ENCODE measurements at regions of chr12 and their contacts with region 1.

Region 1: GRCh38 chr12:15698377-15698871 is 90.8 kb downstream of the EPS8 start:
- DNase-seq: no peak
- ATAC-seq: no peak
- H3K4me3 ChIP-seq: no peak overlapping the region
- H3K27ac ChIP-seq: peak overlapping the region; percentile 54
- H3K4me1 ChIP-seq: peaks cover 23% of the 10 kb centered on the region
- H3K27me3 ChIP-seq: no peaks in the 10 kb centered on the region
- CTCF ChIP-seq: no peak

Region 2: DNA sequence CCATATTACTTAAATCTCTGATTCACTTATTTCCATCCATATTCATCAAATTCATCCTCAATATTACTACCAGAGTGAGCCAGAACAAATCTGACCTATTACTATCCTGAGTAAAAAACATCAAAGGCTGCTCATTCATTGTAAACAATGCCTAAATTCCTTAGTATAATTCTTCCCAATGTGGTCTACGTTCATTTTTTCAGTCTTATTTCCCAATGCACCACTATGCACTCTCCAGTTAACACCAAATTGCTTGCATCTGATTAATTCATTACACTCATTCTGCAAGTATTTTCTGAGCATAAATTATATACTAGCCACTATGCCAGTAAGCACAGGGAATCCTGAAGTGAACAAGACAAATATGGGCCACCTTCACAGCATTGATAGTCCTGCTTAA is 19.3 kb before region 1 on chr12:
- CTCF ChIA-PET with region 1: no interaction called
- POLR2A ChIA-PET with region 1: no interaction called
- in situ Hi-C with region 1: no loop called
- intact Hi-C with region 1: no loop called
- DNase-seq: no peak
- ATAC-seq: no peak
- H3K4me3 ChIP-seq: no peak overlapping the region
- H3K27ac ChIP-seq: no peak overlapping the region
- H3K4me1 ChIP-seq: no peaks in the 10 kb centered on the region; the same call in 1 of the 2 replicates
- H3K27me3 ChIP-seq: no peaks in the 10 kb centered on the region
- CTCF ChIP-seq: no peak

Region 3: DNA sequence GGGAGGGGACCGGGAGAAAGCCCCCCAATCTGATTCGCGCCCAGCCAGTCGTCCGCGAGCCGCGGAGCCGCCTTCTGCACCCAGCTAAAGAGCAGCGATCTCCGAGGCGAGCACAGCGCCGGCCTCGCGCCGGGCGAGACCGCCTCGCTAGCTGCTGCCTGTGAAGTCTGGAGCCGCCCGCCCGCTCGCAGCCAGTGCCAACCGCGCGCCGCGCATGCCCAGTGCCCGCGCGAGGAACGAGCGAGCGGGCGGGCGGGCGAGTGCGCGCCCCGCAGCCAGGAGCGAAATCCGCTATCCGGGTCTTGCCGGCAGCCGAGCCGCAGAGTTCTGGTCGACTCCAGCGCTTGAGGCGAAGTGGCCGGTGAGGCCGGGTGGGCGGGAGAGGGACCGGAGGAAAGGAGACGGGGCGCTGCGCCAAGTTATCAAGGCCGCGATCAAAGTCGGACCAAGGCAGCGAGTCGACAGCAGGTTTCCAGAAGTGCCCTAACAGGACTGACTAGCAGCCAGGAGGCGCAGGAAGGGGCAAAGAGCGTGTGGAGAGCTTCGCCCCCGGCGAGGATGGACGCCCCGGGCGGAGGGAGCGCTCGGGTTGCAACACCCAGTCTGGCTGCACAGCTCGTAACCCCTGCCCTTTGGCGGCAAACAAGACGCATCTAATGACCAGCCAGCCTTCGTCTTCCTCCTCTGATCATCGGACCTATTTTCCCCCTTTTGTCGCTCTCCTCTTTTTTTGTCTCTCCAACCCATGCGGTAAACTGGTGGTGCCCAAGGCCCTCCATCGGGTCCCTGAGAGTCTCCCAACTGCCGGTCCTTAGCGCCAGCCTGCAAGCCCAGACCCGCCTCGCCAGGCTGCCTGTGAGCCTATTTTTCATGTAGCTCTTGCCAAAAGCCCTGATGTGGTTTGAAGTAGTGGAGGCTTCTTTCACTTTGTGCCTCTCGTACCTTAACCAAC is 91.1 kb after region 1 on chr12 and contains the start of gene EPS8:
- CTCF ChIA-PET with region 1: interaction called, 3 read pairs
- POLR2A ChIA-PET with region 1: interaction called, 12 read pairs
- in situ Hi-C with region 1: no loop called
- intact Hi-C with region 1: no loop called
- DNase-seq: no peak
- ATAC-seq: peak; percentile 91
- H3K4me3 ChIP-seq: peak within 1 kb of the TSS; percentile 79
- H3K27ac ChIP-seq: peak within 1 kb of the TSS; percentile 97
- H3K4me1 ChIP-seq: peaks cover 4% of the 10 kb centered on the region
- H3K27me3 ChIP-seq: no peaks in the 10 kb centered on the region
- CTCF ChIP-seq: no peak
- total RNA-seq, gene EPS8: 32.0 TPM